Activated CD4-positive, alpha-beta memory T cell treated with anti-CD3 and anti-CD28 coated beads for 36 hours (primary cell): ENCODE measurements at regions of chr7 and their contacts with region 1.

Region 1: GRCh38 chr7:17706734-17707133 is 233.6 kb downstream of the SNX13 start:
- DNase-seq: peak; percentile 49
- H3K4me3 Mint-ChIP-seq: no peak overlapping the region
- H3K27ac Mint-ChIP-seq: no peak overlapping the region
- H3K4me1 Mint-ChIP-seq: no peaks in the 10 kb centered on the region
- H3K27me3 Mint-ChIP-seq: peaks cover 9% of the 10 kb centered on the region

Region 2: DNA sequence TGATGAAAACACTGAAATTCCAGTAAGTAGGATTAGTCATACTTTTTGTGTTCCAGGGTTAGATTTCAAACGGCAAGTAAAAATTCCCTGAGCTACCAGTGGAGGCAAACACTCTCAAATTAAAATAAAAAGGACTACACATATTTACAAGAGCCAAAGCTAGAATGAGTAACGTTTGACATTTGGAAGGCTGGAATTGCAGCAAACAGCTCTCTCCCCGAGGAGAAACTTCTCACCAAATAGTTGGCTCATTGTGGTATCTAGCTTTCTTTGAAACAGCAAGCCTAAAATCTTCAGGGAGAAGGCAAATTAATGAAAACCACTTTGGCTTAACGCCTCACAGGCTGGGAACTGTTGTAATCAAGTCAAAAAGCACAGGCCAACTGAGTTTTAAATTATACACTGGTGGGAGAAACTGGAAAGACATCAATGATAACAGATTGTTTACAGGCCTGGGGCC is 54.8 kb before region 1 on chr7:
- CTCF ChIA-PET with region 1: no interaction called
- POLR2A ChIA-PET with region 1: no interaction called
- intact Hi-C with region 1: no loop called
- DNase-seq: no peak
- H3K4me3 Mint-ChIP-seq: no peak overlapping the region
- H3K27ac Mint-ChIP-seq: no peak overlapping the region
- H3K4me1 Mint-ChIP-seq: no peaks in the 10 kb centered on the region
- H3K27me3 Mint-ChIP-seq: peaks cover 12% of the 10 kb centered on the region

Region 3: DNA sequence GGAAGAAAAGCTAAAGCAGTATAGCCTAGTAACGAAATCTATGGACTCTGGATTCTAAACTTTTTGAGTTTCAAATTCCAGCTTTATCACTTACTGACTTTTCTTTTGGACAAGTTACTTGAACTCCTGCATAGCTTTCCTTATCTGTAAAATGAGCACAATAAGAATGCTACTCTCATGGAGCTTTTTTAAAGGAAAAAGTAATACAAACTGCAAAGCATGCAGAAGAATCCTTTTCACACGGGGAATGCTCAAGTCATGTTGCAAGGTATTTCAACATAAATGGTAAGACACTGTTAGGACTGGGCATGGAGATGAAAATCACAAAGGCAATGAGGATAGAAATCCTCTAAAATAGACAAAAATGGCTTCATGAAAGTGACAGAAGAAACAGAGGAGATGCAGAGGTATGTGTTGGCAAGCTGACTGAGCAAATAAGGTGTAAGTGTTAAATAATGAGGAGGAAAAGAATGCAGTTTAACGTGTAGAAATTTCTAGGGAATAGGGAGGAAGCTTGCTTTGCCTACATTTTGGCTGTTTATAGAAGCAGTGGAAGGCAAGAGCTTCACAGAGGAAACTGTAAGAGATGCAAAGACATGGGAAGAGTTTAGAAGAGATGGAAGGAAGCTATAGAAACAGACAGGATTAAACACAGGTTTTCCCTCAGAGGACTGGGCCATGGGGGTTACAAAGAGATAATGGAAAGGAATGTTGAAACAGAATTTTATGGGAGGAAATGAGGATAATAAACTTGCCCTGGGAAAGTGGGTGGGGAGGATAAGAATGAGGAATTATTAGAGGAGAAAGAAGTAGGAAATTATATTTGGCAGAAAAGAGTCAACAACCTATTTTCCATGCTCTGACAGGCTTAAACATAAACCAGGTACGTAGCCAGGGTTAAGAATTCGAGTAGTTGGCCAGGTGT is 262.3 kb after region 1 on chr7:
- CTCF ChIA-PET with region 1: no interaction called
- POLR2A ChIA-PET with region 1: no interaction called
- intact Hi-C with region 1: loop called (anchors 1 kb)
- DNase-seq: no peak
- H3K4me3 Mint-ChIP-seq: no peak overlapping the region
- H3K27ac Mint-ChIP-seq: no peak overlapping the region
- H3K4me1 Mint-ChIP-seq: no peaks in the 10 kb centered on the region
- H3K27me3 Mint-ChIP-seq: peaks cover 2% of the 10 kb centered on the region

Region 4: GRCh38 chr7:17991866-17992648 is 285.3 kb after region 1 on chr7:
- CTCF ChIA-PET with region 1: no interaction called
- POLR2A ChIA-PET with region 1: no interaction called
- intact Hi-C with region 1: loop called (anchors 5 kb)
- DNase-seq: peak; percentile 47
- H3K4me3 Mint-ChIP-seq: no peak overlapping the region
- H3K27ac Mint-ChIP-seq: no peak overlapping the region
- H3K4me1 Mint-ChIP-seq: peaks cover 13% of the 10 kb centered on the region
- H3K27me3 Mint-ChIP-seq: peaks cover 10% of the 10 kb centered on the region

Region 5: DNA sequence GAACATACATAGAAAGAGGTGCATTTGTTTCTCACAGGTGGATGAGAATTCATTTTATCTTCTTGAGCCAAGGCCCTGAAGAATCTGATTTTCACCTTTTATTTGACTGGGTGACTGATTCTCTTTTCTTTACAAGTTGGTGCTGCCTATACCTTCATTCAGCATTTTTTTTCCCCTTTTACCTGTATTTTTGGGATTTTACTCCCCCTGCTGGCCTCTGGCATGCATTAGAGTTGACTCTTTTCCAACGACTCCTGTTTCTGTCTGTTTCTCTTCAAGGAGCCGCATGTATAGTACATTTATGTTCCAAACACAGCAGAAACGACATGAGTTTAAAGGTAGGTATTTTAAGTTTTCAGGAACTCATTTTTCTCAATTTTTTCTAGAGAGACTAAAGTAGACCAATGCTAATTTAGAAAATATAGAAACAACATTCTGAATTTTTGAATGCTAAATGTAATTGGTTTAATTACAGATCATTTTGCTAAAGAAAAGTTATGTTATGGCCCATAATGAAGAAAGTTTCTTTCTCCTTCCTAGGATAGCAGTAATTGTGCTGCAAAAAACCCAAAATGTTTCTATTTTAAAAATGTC is 639.0 kb after region 1 on chr7:
- CTCF ChIA-PET with region 1: interaction called, 3 read pairs
- POLR2A ChIA-PET with region 1: no interaction called
- intact Hi-C with region 1: loop called (anchors 2 kb)
- DNase-seq: peak; percentile 20
- H3K4me3 Mint-ChIP-seq: no peak overlapping the region
- H3K27ac Mint-ChIP-seq: no peak overlapping the region
- H3K4me1 Mint-ChIP-seq: no peaks in the 10 kb centered on the region
- H3K27me3 Mint-ChIP-seq: peaks cover 5% of the 10 kb centered on the region

Region 6: DNA sequence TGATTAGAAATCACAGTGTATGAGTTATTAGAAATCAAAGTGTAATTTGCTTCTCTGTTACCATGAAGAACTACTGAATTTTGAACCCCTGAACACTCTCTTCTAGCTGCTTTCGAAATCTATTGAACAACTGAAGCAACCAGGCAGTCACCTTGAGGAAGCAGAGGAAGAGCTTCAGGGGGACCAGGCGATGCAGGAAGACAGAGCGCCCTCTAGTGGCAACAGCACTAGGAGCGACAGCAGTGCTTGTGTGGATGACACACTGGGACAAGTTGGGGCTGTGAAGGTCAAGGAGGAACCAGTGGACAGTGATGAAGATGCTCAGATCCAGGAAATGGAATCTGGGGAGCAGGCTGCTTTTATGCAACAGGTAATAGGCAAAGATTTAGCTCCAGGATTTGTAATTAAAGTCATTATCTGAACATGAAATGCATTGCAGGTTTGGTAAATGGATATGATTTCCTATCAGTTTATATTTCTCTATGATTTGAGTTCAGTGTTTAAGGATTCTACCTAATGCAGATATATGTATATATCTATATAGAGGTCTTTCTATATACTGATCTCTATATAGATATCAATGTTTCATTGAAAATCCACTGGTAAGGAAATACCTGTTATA is 959.5 kb after region 1 on chr7:
- CTCF ChIA-PET with region 1: no interaction called
- POLR2A ChIA-PET with region 1: no interaction called
- intact Hi-C with region 1: loop called (anchors 5 kb)
- DNase-seq: peak; percentile 69
- H3K4me3 Mint-ChIP-seq: no peak overlapping the region
- H3K27ac Mint-ChIP-seq: no peak overlapping the region
- H3K4me1 Mint-ChIP-seq: no peaks in the 10 kb centered on the region
- H3K27me3 Mint-ChIP-seq: no peaks in the 10 kb centered on the region